ENCODE measurements at regions of chr9 and their contacts with region 1.

Region 1: GRCh38 chr9:78973889-78974288 is 597.9 kb upstream of the TLE4 start:
- DNase-seq: no peak
- ATAC-seq: no peak
- H3K4me3 ChIP-seq: no peak overlapping the region
- H3K4me3 Mint-ChIP-seq: no peak overlapping the region
- H3K27ac ChIP-seq: no peak overlapping the region
- H3K27ac Mint-ChIP-seq: no peak overlapping the region
- H3K4me1 ChIP-seq: no peaks in the 10 kb centered on the region
- H3K4me1 Mint-ChIP-seq: no peaks in the 10 kb centered on the region
- H3K27me3 ChIP-seq: no peaks in the 10 kb centered on the region
- H3K27me3 Mint-ChIP-seq: no peaks in the 10 kb centered on the region
- CTCF ChIP-seq: no peak

Region 2: GRCh38 chr9:78939311-78940065 is 34.4 kb before region 1 on chr9:
- CTCF ChIA-PET with region 1: no interaction called
- POLR2A ChIA-PET with region 1: no interaction called
- intact Hi-C with region 1: no loop called
- DNase-seq: no peak
- ATAC-seq: no peak
- H3K4me3 ChIP-seq: no peak overlapping the region
- H3K4me3 Mint-ChIP-seq: no peak overlapping the region
- H3K27ac ChIP-seq: no peak overlapping the region
- H3K27ac Mint-ChIP-seq: no peak overlapping the region
- H3K4me1 ChIP-seq: no peaks in the 10 kb centered on the region
- H3K4me1 Mint-ChIP-seq: no peaks in the 10 kb centered on the region
- H3K27me3 ChIP-seq: no peaks in the 10 kb centered on the region
- H3K27me3 Mint-ChIP-seq: no peaks in the 10 kb centered on the region
- CTCF ChIP-seq: no peak

Region 3: GRCh38 chr9:78958892-78959291 is 15.0 kb before region 1 on chr9:
- CTCF ChIA-PET with region 1: no interaction called
- POLR2A ChIA-PET with region 1: no interaction called
- intact Hi-C with region 1: loop called in 1 of 2 experiments (anchors 2 kb)
- DNase-seq: no peak
- ATAC-seq: no peak
- H3K4me3 ChIP-seq: no peak overlapping the region
- H3K4me3 Mint-ChIP-seq: no peak overlapping the region
- H3K27ac ChIP-seq: no peak overlapping the region
- H3K27ac Mint-ChIP-seq: no peak overlapping the region
- H3K4me1 ChIP-seq: no peaks in the 10 kb centered on the region
- H3K4me1 Mint-ChIP-seq: no peaks in the 10 kb centered on the region
- H3K27me3 ChIP-seq: no peaks in the 10 kb centered on the region
- H3K27me3 Mint-ChIP-seq: no peaks in the 10 kb centered on the region
- CTCF ChIP-seq: no peak

Region 4: GRCh38 chr9:79461712-79462111 is 487.8 kb after region 1 on chr9:
- CTCF ChIA-PET with region 1: no interaction called
- POLR2A ChIA-PET with region 1: no interaction called
- intact Hi-C with region 1: no loop called
- DNase-seq: no peak
- ATAC-seq: no peak
- H3K4me3 ChIP-seq: no peak overlapping the region
- H3K4me3 Mint-ChIP-seq: no peak overlapping the region
- H3K27ac ChIP-seq: no peak overlapping the region
- H3K27ac Mint-ChIP-seq: no peak overlapping the region
- H3K4me1 ChIP-seq: no peaks in the 10 kb centered on the region
- H3K4me1 Mint-ChIP-seq: no peaks in the 10 kb centered on the region
- H3K27me3 ChIP-seq: no peaks in the 10 kb centered on the region
- H3K27me3 Mint-ChIP-seq: peaks cover 6% of the 10 kb centered on the region
- CTCF ChIP-seq: no peak